Heart left ventricle (tissue), 16 donors: ENCODE measurements at regions of chr22 and their contacts with region 1.

Region 1: DNA sequence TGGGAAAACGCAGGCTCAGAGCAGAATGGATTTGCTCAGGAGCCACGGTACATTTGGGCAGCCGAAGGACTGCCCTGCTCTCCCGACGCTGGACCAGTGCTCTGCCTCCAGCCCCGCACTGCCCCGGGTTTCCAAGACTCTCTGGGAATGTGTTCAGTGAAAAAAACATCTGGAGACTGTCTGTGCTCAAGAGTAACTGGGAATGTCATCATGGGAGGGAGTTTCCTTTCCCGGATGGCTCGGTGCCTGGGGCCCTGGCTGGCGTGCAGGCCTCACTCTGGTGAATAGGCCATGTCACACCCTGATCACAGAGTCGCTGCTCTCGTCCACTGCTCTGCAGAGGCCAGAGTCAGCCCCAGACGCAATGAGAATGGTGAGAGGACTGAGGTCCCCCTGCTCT is 9.8 kb upstream of the APOL6 start:
- DNase-seq: peak; percentile 89 to 94 (median 92)
- ATAC-seq: peak; percentile 96 to 98 (median 96)
- H3K4me3 ChIP-seq: peak overlapping the region in 3 of 12 donors; percentile 3 to 14 (median 11)
- H3K27ac ChIP-seq: peak overlapping the region; percentile 74 to 93 (median 84)
- H3K4me1 ChIP-seq: peaks cover 9 to 45% (median 30%) of the 10 kb centered on the region in 12 donors
- H3K27me3 ChIP-seq: no peaks in the 10 kb centered on the region
- CTCF ChIP-seq: no peak
- POLR2A ChIP-seq: peak in 1 of 2 donors; percentile 39

Region 2: DNA sequence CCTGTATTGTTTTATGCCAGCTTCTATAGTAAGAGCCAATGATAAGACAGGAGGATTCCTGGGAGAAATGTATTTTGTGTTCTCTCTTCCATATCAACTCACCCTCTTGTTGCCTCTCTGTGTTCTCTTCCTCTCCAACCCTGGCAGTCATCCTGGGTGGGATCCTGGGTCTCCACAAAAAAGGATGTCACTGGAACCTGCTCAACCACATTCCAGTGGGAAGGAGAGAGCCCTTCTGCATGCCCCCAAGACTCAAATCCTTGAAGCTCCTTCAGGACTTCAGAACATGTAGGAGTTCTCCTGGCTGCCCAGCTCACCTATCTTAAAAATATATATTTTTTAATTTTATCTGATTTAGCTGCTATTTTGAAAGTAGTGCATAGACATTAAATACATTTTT is 35.9 kb after region 1 on chr22:
- intact Hi-C with region 1: loop called in 1 of 10 experiments (anchors 5 kb)
- DNase-seq: no peak
- ATAC-seq: no peak
- H3K4me3 ChIP-seq: no peak overlapping the region
- H3K27ac ChIP-seq: no peak overlapping the region
- H3K4me1 ChIP-seq: peaks cover 0 to 7% (median 0%) of the 10 kb centered on the region in 12 donors
- H3K27me3 ChIP-seq: no peaks in the 10 kb centered on the region
- CTCF ChIP-seq: no peak
- POLR2A ChIP-seq: no peak

Region 3: GRCh38 chr22:35749808-35750207 is 111.4 kb after region 1 on chr22:
- intact Hi-C with region 1: loop called in 1 of 10 experiments (anchors 5 kb)
- DNase-seq: no peak
- ATAC-seq: peak in 2 of 4 donors; percentile 20 to 30
- H3K4me3 ChIP-seq: no peak overlapping the region
- H3K27ac ChIP-seq: no peak overlapping the region
- H3K4me1 ChIP-seq: peaks cover 0 to 48% (median 28%) of the 10 kb centered on the region in 12 donors
- H3K27me3 ChIP-seq: no peaks in the 10 kb centered on the region
- CTCF ChIP-seq: no peak
- POLR2A ChIP-seq: no peak

Region 4: DNA sequence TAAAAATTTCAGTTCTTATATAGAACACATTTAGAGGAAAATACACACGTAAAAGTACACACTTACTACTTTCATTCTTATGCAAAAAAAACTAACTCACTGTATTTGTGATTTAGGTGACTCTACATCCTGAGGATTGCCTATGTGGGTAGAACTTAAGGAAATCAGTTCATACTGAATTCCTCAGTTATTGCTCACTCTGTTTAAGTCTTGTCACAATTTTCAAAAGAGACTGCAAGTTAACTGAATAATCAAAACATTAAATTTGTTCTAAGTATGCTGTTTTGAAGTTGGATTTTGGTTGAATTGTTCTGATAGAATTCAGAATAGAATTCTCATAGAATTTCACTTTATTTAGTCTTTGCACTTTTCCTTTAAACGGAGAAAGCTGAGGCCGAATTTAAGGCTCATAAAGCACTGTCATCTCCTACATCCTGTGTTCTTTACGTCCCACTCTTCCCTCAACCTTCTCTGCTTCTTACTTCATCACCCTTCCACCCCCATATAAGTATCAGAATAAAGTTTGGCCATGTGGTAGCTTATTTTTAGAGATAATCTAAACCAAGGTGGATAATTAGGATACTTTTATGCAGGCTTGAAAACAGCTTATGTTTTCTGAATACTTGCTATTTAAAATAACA is 139.0 kb after region 1 on chr22:
- intact Hi-C with region 1: no loop called
- DNase-seq: no peak
- ATAC-seq: no peak
- H3K4me3 ChIP-seq: no peak overlapping the region
- H3K27ac ChIP-seq: no peak overlapping the region
- H3K4me1 ChIP-seq: peaks cover 0 to 39% (median 12%) of the 10 kb centered on the region in 12 donors
- H3K27me3 ChIP-seq: no peaks in the 10 kb centered on the region
- CTCF ChIP-seq: no peak
- POLR2A ChIP-seq: no peak